ENCODE measurements at regions of chr20 and their contacts with region 1.

Region 1: GRCh38 chr20:45373353-45374100 is 4.6 kb downstream of the TP53TG5 start:
- DNase-seq: peak; percentile 87 to 90 (median 89)
- H3K4me3 ChIP-seq: peak overlapping the region; percentile 34 to 88 (median 63)
- H3K27ac ChIP-seq: no peak overlapping the region
- H3K4me1 ChIP-seq: peaks cover 3 to 14% (median 12%) of the 10 kb centered on the region in 4 experiments
- H3K27me3 ChIP-seq: no peaks in the 10 kb centered on the region

Region 2: DNA sequence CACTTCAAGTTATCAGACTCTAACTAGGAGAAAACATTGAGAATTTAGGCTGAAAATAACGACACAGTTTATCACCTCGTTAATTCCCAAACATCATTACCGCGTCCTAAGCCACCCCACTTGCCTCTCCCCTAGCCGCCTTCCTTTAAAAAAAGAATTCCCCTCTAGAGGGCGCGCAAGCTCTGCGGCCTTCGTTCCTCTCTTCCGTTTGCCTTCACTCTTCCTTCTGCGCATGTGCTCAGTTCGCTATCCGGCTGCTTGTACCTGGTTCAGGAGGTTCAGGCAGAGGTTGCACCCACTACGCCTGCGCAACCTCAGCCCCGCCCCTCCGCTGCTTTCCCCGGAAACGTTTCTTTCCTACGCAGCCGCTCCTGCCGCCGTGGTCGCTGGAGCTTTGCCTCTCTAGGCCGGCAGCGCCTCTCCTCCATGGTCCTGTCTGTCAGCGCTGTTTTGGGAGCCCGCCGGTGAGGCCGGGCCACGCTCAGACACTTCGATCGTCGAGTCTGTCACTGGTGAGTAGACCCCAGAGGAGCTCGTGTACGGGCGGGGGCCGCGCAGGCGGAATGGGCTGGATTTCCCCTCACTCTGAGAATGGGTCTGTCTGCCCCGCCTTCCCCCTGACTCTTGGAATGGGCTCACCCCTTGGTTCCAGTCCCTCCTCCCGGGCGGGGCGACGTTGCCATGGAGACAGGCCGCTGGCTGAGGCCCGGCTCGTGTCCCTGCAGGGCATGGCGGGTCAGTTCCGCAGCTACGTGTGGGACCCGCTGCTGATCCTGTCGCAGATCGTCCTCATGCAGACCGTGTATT is 10.5 kb before region 1 on chr20 and contains the start of gene SYS1:
- CTCF ChIA-PET with region 1: interaction called, 86 read pairs
- POLR2A ChIA-PET with region 1: interaction called, 5 read pairs
- DNase-seq: peak; percentile 98 to 99 (median 98)
- H3K4me3 ChIP-seq: peak within 1 kb of the TSS; percentile 59 to 92 (median 85)
- H3K27ac ChIP-seq: peak within 1 kb of the TSS; percentile 89 to 95
- H3K4me1 ChIP-seq: peaks cover 15 to 58% (median 44%) of the 10 kb centered on the region in 4 experiments
- H3K27me3 ChIP-seq: no peaks in the 10 kb centered on the region

Region 3: DNA sequence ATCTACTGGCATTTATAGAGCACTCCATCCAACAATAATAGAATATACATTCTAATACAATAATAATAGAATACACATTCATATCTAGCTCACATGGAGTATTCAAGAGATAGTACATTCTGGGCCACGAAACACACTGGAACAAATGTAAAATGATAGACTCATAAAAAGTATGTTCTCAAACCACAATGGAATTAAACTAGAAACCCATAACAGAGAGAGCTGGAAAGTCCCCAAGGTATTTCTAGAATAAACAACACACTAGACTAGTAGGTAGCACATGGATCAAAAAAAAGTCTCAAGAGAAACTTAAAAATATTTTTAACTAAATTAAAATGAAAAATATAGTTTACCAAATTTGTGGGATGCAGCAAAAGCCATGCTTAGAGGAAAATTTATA is 13.7 kb after region 1 on chr20:
- CTCF ChIA-PET with region 1: interaction called, 20 read pairs
- POLR2A ChIA-PET with region 1: interaction called, 4 read pairs
- DNase-seq: no peak
- H3K4me3 ChIP-seq: no peak overlapping the region
- H3K27ac ChIP-seq: no peak overlapping the region
- H3K4me1 ChIP-seq: no peaks in the 10 kb centered on the region
- H3K27me3 ChIP-seq: no peaks in the 10 kb centered on the region

Region 4: GRCh38 chr20:45406259-45407066 is 32.9 kb after region 1 on chr20:
- CTCF ChIA-PET with region 1: interaction called, 37 read pairs
- POLR2A ChIA-PET with region 1: interaction called, 3 read pairs
- DNase-seq: peak in 2 of 3 donors; percentile 16 to 52
- H3K4me3 ChIP-seq: peak overlapping the region; percentile 60 to 87 (median 74)
- H3K27ac ChIP-seq: no peak overlapping the region
- H3K4me1 ChIP-seq: peaks cover 2 to 38% (median 34%) of the 10 kb centered on the region in 4 experiments
- H3K27me3 ChIP-seq: peaks cover 4 to 14% (median 9%) of the 10 kb centered on the region in 5 experiments

Region 5: GRCh38 chr20:45450097-45450818 is 76.7 kb after region 1 on chr20:
- CTCF ChIA-PET with region 1: interaction called, 40 read pairs
- POLR2A ChIA-PET with region 1: no interaction called
- DNase-seq: peak; percentile 86 to 93 (median 92)
- H3K4me3 ChIP-seq: no peak overlapping the region
- H3K27ac ChIP-seq: no peak overlapping the region
- H3K4me1 ChIP-seq: no peaks in the 10 kb centered on the region
- H3K27me3 ChIP-seq: no peaks in the 10 kb centered on the region

Region 6: DNA sequence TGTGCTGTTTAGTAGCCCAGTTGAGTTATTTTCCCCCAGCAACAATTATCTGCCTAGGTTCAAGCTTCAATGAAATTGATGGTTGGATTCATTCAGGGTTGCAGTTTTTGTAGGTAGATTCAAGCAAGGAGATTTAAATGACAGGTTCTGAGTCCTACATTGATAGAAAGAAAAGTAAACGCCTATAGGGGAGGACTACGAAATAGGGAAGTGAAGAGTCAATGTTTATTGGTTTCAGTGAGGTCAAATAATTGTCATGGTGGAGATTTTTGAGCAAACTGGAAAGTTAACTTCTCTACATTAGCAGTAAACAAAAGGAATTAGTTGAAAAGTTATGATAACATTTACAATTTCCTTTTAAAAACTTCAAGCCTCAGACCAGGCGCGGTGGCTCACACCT is 327.6 kb after region 1 on chr20:
- CTCF ChIA-PET with region 1: no interaction called
- POLR2A ChIA-PET with region 1: no interaction called
- DNase-seq: no peak
- H3K4me3 ChIP-seq: no peak overlapping the region
- H3K27ac ChIP-seq: no peak overlapping the region
- H3K4me1 ChIP-seq: no peaks in the 10 kb centered on the region
- H3K27me3 ChIP-seq: peaks cover 0 to 2% (median 0%) of the 10 kb centered on the region in 5 experiments

Measured in common myeloid progenitor, CD34-positive (primary cell).